ENCODE measurements at regions of chr2 and their contacts with region 1.

Region 1: DNA sequence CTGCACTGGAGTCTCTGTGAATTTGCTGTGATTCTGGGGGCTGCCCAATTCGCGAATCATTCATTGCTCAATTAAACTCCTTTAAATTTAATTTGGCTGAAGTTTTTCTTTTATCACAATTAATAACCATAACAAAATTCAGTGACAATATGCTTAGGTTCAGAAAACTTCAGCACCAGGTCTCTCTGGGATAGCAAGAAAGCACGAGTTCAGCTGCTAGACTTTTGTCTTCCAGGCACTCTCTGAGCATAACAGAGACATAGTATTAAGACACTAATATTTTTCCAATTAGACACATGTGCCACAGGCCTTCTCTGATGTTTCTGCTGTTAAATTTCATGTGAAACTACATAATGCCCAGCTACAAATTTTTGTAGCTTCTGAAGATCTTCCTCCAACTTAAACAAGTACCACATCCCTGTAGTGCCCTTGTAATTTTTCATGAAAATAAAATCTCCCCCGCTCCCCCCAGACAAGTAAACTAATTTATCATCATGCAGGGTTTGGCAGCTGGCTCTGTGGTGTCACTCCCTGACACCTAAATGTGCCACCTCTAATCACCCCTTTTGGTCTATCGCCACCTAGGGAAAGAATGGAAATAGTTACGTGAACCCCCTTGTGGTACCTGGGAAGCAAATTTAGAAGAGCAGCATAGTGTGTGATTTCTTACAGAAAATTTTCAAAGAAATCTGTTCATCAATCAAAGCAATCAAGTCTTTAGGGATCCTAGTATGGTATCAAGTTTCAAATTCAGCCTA is 94.1 kb downstream of the CSRNP3 start:
- DNase-seq: no peak

Region 2: DNA sequence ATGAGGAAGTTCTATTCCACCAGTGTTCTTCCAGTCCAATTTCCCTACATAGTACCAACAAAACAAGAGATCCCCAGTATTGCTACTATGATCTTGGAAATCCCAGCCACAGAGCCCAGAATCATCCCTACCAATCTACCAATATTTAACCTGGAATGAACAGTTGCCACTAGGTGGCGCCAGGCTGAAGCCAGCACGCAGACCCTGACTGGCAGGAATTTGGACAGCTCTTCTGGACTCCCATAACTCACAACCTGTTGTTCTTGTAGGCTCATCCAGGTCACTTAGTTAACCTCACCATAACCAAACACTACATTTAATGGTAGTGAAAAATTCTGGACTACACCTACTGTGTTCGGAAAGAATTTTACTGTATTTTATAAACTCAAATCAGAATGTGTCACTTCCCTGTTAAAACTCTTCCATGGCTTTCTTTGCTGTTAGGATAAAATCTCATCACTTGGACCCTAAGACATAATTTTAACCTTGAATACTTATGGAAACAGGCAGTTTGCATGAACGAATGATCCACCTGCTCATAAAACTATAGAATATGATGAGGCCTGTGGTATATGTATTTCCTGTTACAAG is 548.5 kb before region 1 on chr2:
- intact Hi-C with region 1: no loop called
- DNase-seq: peak in 7 of 10 donors; percentile 59 to 92 (median 74)

Region 3: GRCh38 chr2:165594935-165595255 is 31.2 kb after region 1 on chr2:
- intact Hi-C with region 1: no loop called
- DNase-seq: no peak

Region 4: GRCh38 chr2:165874445-165875039 is 310.9 kb after region 1 on chr2:
- intact Hi-C with region 1: loop called (anchors 10 kb)
- DNase-seq: no peak